Posterior vena cava (tissue), 2 donors: ENCODE measurements at regions of chr2 and their contacts with region 1.

Region 1: DNA sequence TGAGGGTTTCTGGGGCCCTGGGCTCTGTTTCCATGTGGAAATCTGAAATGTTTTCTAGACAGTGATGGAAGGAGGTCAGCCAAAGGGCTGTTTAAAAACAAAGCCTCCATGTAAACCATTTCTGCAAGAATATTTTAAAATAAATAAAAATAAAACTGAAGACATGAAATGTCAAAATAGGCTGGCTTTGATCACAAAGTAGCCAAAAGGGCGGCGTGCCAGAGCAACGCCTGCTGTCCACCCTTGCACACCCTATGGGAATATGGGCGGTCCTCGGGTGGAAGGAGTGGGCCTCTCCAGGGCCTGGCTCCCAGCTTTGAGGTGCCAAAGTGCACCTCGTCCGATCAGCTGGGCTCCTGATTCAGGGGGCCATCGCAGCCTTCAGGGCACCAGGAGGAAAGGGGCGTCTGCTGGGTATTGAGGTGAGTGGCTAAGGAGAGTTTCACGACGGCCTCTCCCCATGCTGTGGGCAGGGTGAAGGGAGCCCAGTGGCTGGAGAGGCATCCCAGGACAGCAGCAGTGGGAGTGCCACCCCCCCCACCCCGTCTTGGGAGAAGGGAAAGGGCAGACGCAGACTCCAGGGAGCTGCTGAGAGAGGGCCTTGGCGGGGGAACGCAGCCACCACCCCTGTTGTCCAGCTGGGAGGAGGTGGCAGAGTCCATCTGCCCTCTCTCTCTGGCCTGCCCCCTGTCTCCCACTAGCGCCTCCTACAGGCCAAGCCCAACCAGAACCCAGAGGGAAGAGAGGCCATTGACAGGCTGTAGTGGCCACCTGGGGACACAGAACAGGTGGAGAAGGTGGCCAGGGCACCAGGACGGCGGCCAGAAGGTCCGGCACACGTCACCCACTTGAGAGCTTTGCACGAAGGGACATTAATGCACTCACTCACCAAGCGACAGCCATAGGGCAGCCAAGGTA is 5.7 kb upstream of the ERFE start:
- DNase-seq: no peak

Region 2: DNA sequence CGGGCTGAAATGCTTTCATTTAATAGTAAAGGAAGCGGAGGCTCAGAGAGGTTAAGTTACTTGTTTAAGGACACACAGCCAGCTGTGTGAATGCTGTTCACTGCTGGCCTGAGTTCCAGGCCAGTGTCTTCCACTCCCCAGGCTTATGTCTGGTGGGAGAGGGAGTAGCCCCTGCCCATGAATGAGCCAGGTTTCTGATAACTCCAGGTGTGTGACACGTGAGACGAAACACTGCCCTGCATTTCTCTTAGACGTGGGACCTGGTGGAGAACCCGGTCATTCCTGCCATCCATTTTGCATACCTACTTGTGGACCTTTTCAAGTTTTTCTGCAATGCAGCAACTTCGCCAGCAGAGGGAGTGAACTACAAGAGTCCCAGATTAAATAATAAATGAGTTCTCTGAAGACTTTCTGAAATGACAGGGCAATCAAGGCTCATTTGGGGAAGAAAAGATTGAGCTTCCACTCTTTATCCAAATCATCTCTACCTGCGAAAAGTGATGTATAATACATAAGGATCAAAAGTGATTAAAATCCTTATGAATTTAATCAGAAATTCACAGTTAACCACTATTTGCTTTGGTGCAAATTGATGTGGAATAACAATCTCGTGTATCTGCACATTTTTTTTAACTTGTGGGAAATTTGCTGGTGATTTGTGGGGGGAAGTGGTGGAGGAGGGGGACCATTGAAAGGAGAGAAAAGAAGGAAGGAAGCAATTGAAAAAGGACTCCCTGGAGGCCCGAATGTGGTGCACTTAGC is 1809.4 kb before region 1 on chr2:
- intact Hi-C with region 1: loop called in 1 of 2 experiments (anchors 5 kb)
- DNase-seq: no peak

Region 3: GRCh38 chr2:238203094-238203972 is 50.3 kb after region 1 on chr2 and contains the start of gene ILKAP:
- intact Hi-C with region 1: no loop called
- DNase-seq: peak; percentile 96
- total RNA-seq, gene ILKAP: 32.2 to 34.9 TPM